HCT116 (cell line): ENCODE measurements at regions of chr22 and their contacts with region 1.

Region 1: GRCh38 chr22:43206509-43207161 is 19.7 kb upstream of the TTLL12 start:
- DNase-seq: no peak
- ATAC-seq: no peak
- H3K4me3 ChIP-seq: no peak overlapping the region
- H3K27ac ChIP-seq: no peak overlapping the region
- H3K4me1 ChIP-seq: peaks cover 0 to 11% of the 10 kb centered on the region in 2 experiments; a peak in 2 of 4 replicates
- H3K27me3 ChIP-seq: no peaks in the 10 kb centered on the region
- CTCF ChIP-seq: no peak
- POLR2A ChIP-seq: no peak
- RAD21 ChIP-seq: no peak

Region 2: GRCh38 chr22:43187171-43188099 is 19.2 kb before region 1 on chr22:
- CTCF ChIA-PET with region 1: interaction called, 11 read pairs
- POLR2A ChIA-PET with region 1: interaction called, 3 read pairs
- RAD21 ChIA-PET with region 1: no interaction called
- intact Hi-C with region 1: no loop called
- DNase-seq: peak; percentile 90
- ATAC-seq: peak; percentile 89
- H3K4me3 ChIP-seq: peak overlapping the region; percentile 73 to 83
- H3K27ac ChIP-seq: peak overlapping the region; percentile 64
- H3K4me1 ChIP-seq: peaks cover 9 to 36% of the 10 kb centered on the region in 2 experiments; a peak in 3 of 4 replicates
- H3K27me3 ChIP-seq: no peaks in the 10 kb centered on the region
- CTCF ChIP-seq: peak; percentile 32 to 65 (median 45); a peak in 5 of 6 replicates
- POLR2A ChIP-seq: peak; percentile 95
- RAD21 ChIP-seq: no peak; the same call in 1 of the 2 replicates